B cell (primary cell): ENCODE measurements at regions of chr6 and their contacts with region 1.

Region 1: GRCh38 chr6:3118353-3119039 is at the start of gene BPHL:
- DNase-seq: peak; percentile 99
- ATAC-seq: peak; percentile 93
- H3K4me3 ChIP-seq: peak within 1 kb of the TSS; percentile 66 to 98 (median 78)
- H3K4me3 Mint-ChIP-seq: peak within 1 kb of the TSS; percentile 97
- H3K27ac ChIP-seq: peak within 1 kb of the TSS; percentile 93 to 95
- H3K27ac Mint-ChIP-seq: peak within 1 kb of the TSS; percentile 98
- H3K4me1 ChIP-seq: peaks cover 12% of the 10 kb centered on the region in 2 donors
- H3K4me1 Mint-ChIP-seq: peaks cover 18% of the 10 kb centered on the region
- H3K27me3 ChIP-seq: no peaks in the 10 kb centered on the region
- H3K27me3 Mint-ChIP-seq: no peaks in the 10 kb centered on the region
- CTCF ChIP-seq: no peak
- total RNA-seq, gene BPHL: 14.3 and 16.3 TPM in 2 replicates

Region 2: DNA sequence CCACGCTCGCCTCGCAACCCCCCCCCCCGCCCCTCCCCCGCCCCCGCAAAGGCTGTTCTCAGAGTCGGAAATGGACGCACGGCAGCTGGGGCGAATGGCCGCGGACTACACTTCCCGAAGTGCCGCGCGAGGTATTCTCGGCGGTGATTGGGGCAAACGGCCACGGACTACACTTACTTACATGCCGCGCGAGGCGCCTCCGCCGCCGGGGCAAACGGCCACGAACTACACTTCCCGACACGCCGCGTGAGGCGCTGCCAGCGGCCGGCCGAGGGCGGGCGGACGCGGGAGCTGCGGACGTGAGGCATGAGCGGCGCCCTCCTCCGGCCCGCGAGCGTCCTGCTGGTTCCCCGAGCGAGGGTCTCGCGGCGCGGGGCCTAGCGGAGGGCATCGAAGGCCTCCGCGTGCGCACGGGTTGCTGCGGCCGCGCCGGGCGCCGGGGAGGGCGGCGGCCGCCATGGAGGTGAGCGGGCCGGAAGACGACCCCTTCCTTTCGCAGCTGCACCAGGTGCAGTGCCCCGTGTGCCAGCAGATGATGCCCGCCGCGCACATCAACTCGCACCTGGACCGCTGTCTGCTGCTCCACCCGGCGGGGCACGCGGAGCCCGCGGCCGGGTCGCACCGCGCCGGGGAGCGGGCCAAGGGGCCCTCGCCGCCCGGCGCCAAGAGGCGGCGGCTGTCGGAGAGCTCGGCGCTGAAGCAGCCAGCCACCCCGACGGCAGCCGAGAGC is 353.2 kb before region 1 on chr6 and contains the start of gene WRNIP1:
- CTCF ChIA-PET with region 1: interaction called, 6 read pairs
- POLR2A ChIA-PET with region 1: no interaction called
- intact Hi-C with region 1: loop called (anchors 1 kb)
- DNase-seq: peak; percentile 98
- ATAC-seq: peak; percentile 87
- H3K4me3 ChIP-seq: peak within 1 kb of the TSS; percentile 66 to 90 (median 77)
- H3K4me3 Mint-ChIP-seq: peak within 1 kb of the TSS; percentile 98
- H3K27ac ChIP-seq: peak within 1 kb of the TSS; percentile 96 to 97
- H3K27ac Mint-ChIP-seq: peak within 1 kb of the TSS; percentile 100
- H3K4me1 ChIP-seq: peaks cover 25 to 33% of the 10 kb centered on the region in 2 donors
- H3K4me1 Mint-ChIP-seq: peaks cover 43% of the 10 kb centered on the region
- H3K27me3 ChIP-seq: no peaks in the 10 kb centered on the region
- H3K27me3 Mint-ChIP-seq: no peaks in the 10 kb centered on the region
- CTCF ChIP-seq: peak; percentile 60
- total RNA-seq, gene WRNIP1: 32.1 and 35.2 TPM in 2 replicates

Region 3: GRCh38 chr6:3023663-3024483 is 94.6 kb before region 1 on chr6:
- CTCF ChIA-PET with region 1: no interaction called
- POLR2A ChIA-PET with region 1: no interaction called
- intact Hi-C with region 1: loop called (anchors 1 kb)
- DNase-seq: peak; percentile 82
- ATAC-seq: peak; percentile 79
- H3K4me3 ChIP-seq: peak overlapping the region; percentile 45 to 88 (median 63)
- H3K4me3 Mint-ChIP-seq: peak overlapping the region; percentile 91
- H3K27ac ChIP-seq: peak overlapping the region; percentile 38 to 50
- H3K27ac Mint-ChIP-seq: peak overlapping the region; percentile 74
- H3K4me1 ChIP-seq: peaks cover 59 to 63% of the 10 kb centered on the region in 2 donors
- H3K4me1 Mint-ChIP-seq: peaks cover 50% of the 10 kb centered on the region
- H3K27me3 ChIP-seq: peaks cover 0 to 4% (median 0%) of the 10 kb centered on the region in 4 experiments
- H3K27me3 Mint-ChIP-seq: peaks cover 5% of the 10 kb centered on the region
- CTCF ChIP-seq: no peak

Region 4: DNA sequence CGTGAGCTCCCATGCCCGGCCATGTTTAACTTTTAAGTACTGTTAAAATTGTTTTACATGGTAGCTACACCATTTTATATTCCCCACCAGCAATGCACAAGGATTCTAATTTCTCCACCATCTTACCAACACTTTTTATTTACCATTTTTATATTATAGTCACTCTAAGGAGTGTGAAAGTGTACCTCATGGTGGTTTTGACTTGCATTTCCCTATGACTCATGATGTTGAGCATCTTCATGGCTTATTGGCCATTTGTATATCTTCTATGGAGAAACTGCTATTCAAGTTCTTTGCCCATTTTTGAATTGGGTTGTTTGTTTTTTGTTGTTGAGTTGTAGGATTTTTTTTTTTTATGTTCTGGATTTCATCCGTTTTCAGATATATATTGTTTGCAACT is 15.6 kb before region 1 on chr6:
- CTCF ChIA-PET with region 1: no interaction called
- POLR2A ChIA-PET with region 1: no interaction called
- intact Hi-C with region 1: no loop called
- DNase-seq: no peak
- ATAC-seq: no peak
- H3K4me3 ChIP-seq: no peak overlapping the region
- H3K4me3 Mint-ChIP-seq: no peak overlapping the region
- H3K27ac ChIP-seq: no peak overlapping the region
- H3K27ac Mint-ChIP-seq: no peak overlapping the region
- H3K4me1 ChIP-seq: no peaks in the 10 kb centered on the region
- H3K4me1 Mint-ChIP-seq: no peaks in the 10 kb centered on the region
- H3K27me3 ChIP-seq: no peaks in the 10 kb centered on the region
- H3K27me3 Mint-ChIP-seq: no peaks in the 10 kb centered on the region
- CTCF ChIP-seq: no peak

Region 5: GRCh38 chr6:3157131-3157927 is 38.8 kb after region 1 on chr6 and contains the start of gene TUBB2A:
- CTCF ChIA-PET with region 1: interaction called, 4 read pairs
- POLR2A ChIA-PET with region 1: no interaction called
- intact Hi-C with region 1: loop called (anchors 1 kb)
- DNase-seq: peak; percentile 91
- ATAC-seq: peak; percentile 90
- H3K4me3 ChIP-seq: peak within 1 kb of the TSS; percentile 47 to 93 (median 65)
- H3K4me3 Mint-ChIP-seq: peak within 1 kb of the TSS; percentile 89
- H3K27ac ChIP-seq: peak within 1 kb of the TSS in 1 of 2 donors; percentile 67
- H3K27ac Mint-ChIP-seq: peak within 1 kb of the TSS; percentile 88
- H3K4me1 ChIP-seq: peaks cover 8 to 18% of the 10 kb centered on the region in 2 donors
- H3K4me1 Mint-ChIP-seq: peaks cover 24% of the 10 kb centered on the region
- H3K27me3 ChIP-seq: peaks cover 0 to 5% (median 0%) of the 10 kb centered on the region in 4 experiments
- H3K27me3 Mint-ChIP-seq: peaks cover 7% of the 10 kb centered on the region
- CTCF ChIP-seq: peak; percentile 70
- total RNA-seq, gene TUBB2A: 4.0 and 4.2 TPM in 2 replicates

Region 6: GRCh38 chr6:3251462-3252314 is 133.2 kb after region 1 on chr6:
- CTCF ChIA-PET with region 1: interaction called, 82 read pairs
- POLR2A ChIA-PET with region 1: no interaction called
- intact Hi-C with region 1: no loop called
- DNase-seq: peak; percentile 82
- ATAC-seq: peak; percentile 100
- H3K4me3 ChIP-seq: peak overlapping the region in 2 of 5 experiments; percentile 5 to 25
- H3K4me3 Mint-ChIP-seq: peak overlapping the region; percentile 7
- H3K27ac ChIP-seq: no peak overlapping the region
- H3K27ac Mint-ChIP-seq: no peak overlapping the region
- H3K4me1 ChIP-seq: peaks cover 7 to 8% of the 10 kb centered on the region in 2 donors
- H3K4me1 Mint-ChIP-seq: peaks cover 4% of the 10 kb centered on the region
- H3K27me3 ChIP-seq: peaks cover 0 to 32% (median 14%) of the 10 kb centered on the region in 4 experiments
- H3K27me3 Mint-ChIP-seq: peaks cover 32% of the 10 kb centered on the region
- CTCF ChIP-seq: peak; percentile 99

Region 7: DNA sequence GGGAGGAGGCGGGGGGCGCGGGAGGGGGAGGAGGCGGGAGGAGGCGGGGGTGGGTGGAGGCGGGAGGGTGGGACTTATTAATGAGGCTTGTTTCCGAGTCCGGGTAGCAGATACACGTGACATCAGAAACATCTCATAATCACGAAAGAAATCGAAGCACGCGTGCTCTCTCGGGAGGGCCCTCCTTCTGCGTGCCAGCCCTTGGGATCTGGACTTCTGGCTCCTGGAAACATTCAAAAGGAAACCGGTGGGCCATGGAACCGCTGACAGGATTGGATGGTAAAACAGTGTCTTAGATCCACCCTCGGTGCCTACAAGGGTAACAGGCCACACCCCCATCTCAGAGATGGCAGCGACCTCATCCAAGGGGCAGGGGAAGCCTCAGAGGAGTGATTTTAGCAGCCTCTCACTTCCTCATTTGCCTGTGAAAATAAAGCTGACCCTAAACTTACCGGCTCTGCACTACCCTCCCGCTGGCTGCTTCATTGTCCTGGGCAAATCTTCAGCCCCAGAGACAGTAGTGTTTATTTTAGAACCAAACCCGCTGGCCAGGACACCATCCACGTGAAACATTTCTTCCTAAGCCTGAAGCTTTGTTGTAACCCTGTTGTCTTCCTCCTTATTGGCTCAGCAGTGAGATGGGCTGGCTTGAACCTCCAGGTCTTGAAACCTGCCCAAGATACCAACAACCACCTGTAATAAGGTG is 237.7 kb after region 1 on chr6:
- CTCF ChIA-PET with region 1: no interaction called
- POLR2A ChIA-PET with region 1: no interaction called
- intact Hi-C with region 1: loop called (anchors 1 kb)
- DNase-seq: peak; percentile 97
- ATAC-seq: peak; percentile 96
- H3K4me3 ChIP-seq: peak overlapping the region; percentile 0 to 82 (median 66)
- H3K4me3 Mint-ChIP-seq: peak overlapping the region; percentile 96
- H3K27ac ChIP-seq: peak overlapping the region; percentile 67 to 82
- H3K27ac Mint-ChIP-seq: peak overlapping the region; percentile 96
- H3K4me1 ChIP-seq: peaks cover 26 to 37% of the 10 kb centered on the region in 2 donors
- H3K4me1 Mint-ChIP-seq: peaks cover 48% of the 10 kb centered on the region
- H3K27me3 ChIP-seq: no peaks in the 10 kb centered on the region
- H3K27me3 Mint-ChIP-seq: no peaks in the 10 kb centered on the region
- CTCF ChIP-seq: no peak

Region 8: GRCh38 chr6:4018172-4018905 is 899.8 kb after region 1 on chr6:
- CTCF ChIA-PET with region 1: no interaction called
- POLR2A ChIA-PET with region 1: interaction called, 5 read pairs
- intact Hi-C with region 1: loop called (anchors 2 kb)
- DNase-seq: peak; percentile 98
- ATAC-seq: peak; percentile 73
- H3K4me3 ChIP-seq: peak overlapping the region; percentile 71 to 91 (median 80)
- H3K4me3 Mint-ChIP-seq: peak overlapping the region; percentile 96
- H3K27ac ChIP-seq: peak overlapping the region; percentile 94 to 97
- H3K27ac Mint-ChIP-seq: peak overlapping the region; percentile 99
- H3K4me1 ChIP-seq: peaks cover 30 to 40% of the 10 kb centered on the region in 2 donors
- H3K4me1 Mint-ChIP-seq: peaks cover 70% of the 10 kb centered on the region
- H3K27me3 ChIP-seq: no peaks in the 10 kb centered on the region
- H3K27me3 Mint-ChIP-seq: no peaks in the 10 kb centered on the region
- CTCF ChIP-seq: peak; percentile 43